Lower leg skin (tissue), 4 donors: ENCODE measurements at regions of chr2 and their contacts with region 1.

Region 1: DNA sequence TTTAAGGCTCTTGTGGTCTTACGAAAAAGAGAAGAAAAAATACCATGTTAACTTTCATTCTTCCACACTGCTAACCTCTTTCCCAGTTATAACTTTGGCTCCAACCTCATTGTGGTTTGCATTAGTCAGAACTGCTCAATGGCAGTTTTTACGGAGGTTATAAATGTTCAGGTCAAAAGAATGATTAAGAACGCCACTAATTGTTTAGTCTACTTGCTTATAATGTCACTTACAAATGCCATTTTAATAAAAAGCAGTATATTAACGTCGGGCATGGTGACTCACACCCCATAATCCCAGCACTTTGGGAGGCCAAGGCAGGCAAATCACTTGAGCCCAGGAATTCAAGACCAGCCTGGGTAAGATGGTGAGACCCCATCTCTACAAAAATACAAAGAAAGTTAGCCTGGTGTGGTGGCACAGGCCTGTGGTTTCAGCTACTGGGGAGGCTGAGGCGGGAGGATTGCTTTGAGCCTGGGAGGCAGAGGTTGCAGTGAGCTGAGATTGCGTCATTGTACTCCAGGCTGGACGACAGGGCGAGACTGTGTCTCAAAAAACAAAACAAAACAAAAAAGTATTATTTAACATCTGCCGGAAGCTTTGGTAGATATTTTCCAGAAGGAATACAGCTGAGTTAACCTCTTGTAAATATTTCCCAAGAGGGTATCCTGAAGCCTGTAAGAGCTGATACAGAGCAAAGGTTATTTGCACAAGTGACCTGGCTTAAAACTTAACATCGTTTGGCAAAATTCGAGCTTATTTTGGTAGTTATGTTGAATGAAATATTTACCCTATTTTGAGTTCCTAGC is 5.1 kb downstream of the AGPS start:
- DNase-seq: no peak
- H3K4me3 ChIP-seq: no peak overlapping the region
- CTCF ChIP-seq: peak in 1 of 3 donors; percentile 39
- POLR2A ChIP-seq: no peak

Region 2: GRCh38 chr2:176106581-176107539 is 1290.8 kb before region 1 on chr2 and contains the start of gene HOXD11:
- intact Hi-C with region 1: loop called (anchors 5 kb)
- DNase-seq: peak in 1 of 2 donors; percentile 89
- H3K4me3 ChIP-seq: peak within 1 kb of the TSS; percentile 27
- CTCF ChIP-seq: no peak
- POLR2A ChIP-seq: no peak
- total RNA-seq, gene HOXD11: 0.23 TPM in 1 of 4 donors, not detected in the others

Region 3: GRCh38 chr2:178628605-178629004 is 1230.9 kb after region 1 on chr2:
- intact Hi-C with region 1: no loop called
- DNase-seq: no peak
- H3K4me3 ChIP-seq: no peak overlapping the region
- CTCF ChIP-seq: no peak
- POLR2A ChIP-seq: no peak